GM10248 (cell line): ENCODE measurements at regions of chr22 and their contacts with region 1.

Region 1: DNA sequence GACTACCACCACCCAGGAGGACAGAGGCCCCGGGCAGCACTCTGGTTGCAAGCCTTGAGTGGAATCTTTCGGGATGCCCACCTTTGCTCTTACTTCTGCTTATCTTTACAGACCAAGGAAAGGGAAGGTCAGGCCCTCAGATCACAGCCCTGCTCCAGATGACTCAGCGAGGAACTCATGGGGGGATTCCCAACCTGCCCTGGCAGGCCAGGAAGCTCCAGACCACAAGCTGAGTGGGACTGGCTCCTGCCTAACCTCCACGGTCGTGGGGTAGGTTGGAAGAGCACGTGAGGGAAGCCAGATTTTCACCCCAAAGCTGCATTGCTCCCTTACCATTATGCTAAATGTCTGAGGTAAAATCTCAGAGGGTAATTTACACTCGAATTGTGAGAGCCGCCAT is 11.8 kb downstream of the TBC1D10A start:
- DNase-seq: peak; percentile 45
- CTCF ChIP-seq: no peak

Region 2: DNA sequence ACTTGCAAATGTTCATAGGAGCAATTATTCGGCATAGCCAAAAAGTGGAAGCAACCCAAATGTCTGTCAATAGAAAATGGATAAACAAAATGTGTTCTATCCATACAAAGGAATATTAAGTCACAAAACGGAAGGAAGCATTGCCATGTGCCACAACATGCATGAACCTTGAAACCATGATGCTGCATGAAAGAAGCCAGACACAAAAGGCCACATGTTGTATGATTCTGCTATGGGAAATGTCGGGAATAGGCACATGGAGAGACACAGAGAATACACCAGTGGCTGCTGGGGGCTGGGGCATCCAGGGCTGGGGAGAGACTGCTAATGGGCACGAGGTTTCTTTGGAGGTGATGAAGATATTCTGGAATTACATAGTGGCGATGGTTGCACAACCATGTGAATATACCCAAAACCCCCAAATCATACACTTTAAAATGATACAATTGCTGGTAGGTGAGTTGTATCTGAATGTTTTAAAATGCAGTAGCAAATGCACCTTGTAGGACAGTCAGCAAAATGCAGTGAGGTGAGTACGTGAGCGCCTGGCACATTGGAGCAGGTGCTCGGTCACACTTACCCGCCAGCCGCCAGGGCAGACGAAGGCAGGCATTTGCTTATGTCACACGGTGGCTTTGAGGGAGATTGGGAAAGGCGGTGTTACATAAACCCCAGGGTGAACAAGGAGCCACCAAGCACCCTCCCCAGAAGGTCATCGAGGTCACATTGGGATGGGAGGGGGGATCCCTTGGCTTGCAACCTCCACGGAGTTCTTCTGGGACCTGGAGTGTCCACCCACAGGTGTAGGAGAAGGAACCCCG is 41.9 kb before region 1 on chr22:
- CTCF ChIA-PET with region 1: no interaction called
- POLR2A ChIA-PET with region 1: no interaction called
- DNase-seq: no peak
- CTCF ChIP-seq: no peak

Region 3: DNA sequence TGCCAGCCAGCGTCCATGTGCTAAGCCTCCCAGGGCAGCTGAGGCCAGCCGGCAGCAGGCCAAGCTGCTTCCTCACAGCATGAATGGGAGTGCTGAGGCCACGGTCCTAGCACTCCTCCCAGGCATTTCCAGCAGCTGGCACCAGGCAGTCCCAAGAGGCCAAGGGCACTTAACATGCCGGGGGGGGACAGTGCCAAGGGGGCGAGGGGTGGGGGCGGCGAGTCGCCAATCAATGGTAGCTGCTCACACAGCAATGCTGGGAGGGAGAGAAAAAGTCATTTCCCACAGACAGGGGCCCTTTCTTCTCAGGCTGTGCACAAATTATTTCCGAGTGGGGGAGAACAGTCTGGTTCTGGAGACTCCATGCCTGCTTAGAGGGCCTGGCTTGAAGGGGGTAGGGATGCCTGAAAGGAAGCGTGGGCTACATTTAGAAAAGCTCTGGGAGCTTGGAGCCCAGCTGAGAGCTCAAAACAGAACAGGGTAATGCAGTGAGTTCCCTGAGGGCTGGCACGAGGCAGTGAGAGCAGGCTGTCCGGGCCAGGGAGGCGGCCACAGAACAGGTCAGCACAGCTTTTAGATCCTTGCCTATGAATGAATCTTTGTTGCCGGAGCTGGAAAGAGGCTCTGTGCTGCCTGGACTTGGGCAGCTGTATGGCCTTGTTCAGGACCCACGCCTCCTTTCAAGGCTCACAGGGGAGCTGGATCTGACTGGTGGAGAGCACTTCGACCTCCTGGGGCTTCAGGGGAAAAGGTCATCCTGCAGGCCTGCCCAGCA is 26.2 kb after region 1 on chr22:
- CTCF ChIA-PET with region 1: interaction called, 10 read pairs
- POLR2A ChIA-PET with region 1: interaction called, 3 read pairs
- DNase-seq: no peak
- CTCF ChIP-seq: no peak